ENCODE measurements at regions of chr1 and their contacts with region 1.

Region 1: DNA sequence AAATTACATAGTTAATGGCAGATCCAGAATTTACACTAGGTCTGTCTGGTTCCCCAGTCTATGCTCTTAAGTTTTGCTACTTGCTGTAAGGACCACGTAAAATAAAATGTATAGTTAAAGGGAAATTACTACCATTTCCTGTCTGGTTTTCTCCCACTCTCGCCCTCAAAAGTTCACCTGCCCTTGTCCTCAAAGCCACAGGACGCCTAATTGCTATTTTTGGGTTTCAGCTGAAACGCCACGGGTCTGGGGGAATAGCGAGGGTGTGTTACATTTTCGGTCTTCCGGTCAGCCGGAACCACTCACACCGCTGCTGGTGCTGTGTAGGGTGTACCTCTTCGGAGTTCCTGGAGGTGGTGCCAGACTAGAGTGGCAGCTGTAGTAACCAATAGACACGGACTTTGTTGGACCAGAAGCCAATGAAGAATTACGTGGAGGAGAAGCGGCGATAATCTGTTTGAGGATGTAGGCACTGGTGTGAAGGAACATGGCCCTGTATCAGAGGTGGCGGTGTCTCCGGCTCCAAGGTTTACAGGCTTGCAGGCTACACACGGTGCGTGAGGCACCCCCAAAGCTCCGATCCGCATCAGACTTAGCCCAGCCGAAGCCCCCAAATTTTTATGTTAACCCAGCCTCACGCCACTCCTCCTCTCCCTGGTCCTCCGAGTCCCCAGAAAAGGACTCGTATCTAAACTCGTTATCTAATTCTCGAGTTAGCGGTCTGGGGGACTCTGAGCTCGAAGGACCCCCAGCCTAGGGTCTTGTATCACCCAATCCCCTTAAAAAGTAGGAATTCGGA is at the start of gene TARS2:
- DNase-seq: peak; percentile 99
- ATAC-seq: peak; percentile 100
- H3K4me3 ChIP-seq: peak within 1 kb of the TSS; percentile 66
- H3K27ac ChIP-seq: peak within 1 kb of the TSS; percentile 78
- H3K4me1 ChIP-seq: no peaks in the 10 kb centered on the region; the same call in 1 of the 2 replicates
- H3K27me3 ChIP-seq: no peaks in the 10 kb centered on the region
- CTCF ChIP-seq: 0 out of 2 replicates have a peak, but pooled peaks have one; percentile 12
- POLR2A ChIP-seq: peak; percentile 52; the same call in 1 of the 2 replicates
- RAD21 ChIP-seq: no peak
- total RNA-seq, gene TARS2: 10.9 and 12.2 TPM in 2 replicates

Region 2: GRCh38 chr1:150532868-150533302 is 45.7 kb after region 1 on chr1:
- CTCF ChIA-PET with region 1: interaction called, 3 read pairs
- POLR2A ChIA-PET with region 1: no interaction called
- dilution Hi-C with region 1: no loop called
- in situ Hi-C with region 1: no loop called
- intact Hi-C with region 1: loop called (anchors 1 kb)
- DNase-seq: no peak
- ATAC-seq: no peak
- H3K4me3 ChIP-seq: no peak overlapping the region
- H3K27ac ChIP-seq: no peak overlapping the region
- H3K4me1 ChIP-seq: peaks cover 27% of the 10 kb centered on the region
- H3K27me3 ChIP-seq: no peaks in the 10 kb centered on the region
- CTCF ChIP-seq: no peak
- POLR2A ChIP-seq: no peak
- RAD21 ChIP-seq: no peak

Region 3: DNA sequence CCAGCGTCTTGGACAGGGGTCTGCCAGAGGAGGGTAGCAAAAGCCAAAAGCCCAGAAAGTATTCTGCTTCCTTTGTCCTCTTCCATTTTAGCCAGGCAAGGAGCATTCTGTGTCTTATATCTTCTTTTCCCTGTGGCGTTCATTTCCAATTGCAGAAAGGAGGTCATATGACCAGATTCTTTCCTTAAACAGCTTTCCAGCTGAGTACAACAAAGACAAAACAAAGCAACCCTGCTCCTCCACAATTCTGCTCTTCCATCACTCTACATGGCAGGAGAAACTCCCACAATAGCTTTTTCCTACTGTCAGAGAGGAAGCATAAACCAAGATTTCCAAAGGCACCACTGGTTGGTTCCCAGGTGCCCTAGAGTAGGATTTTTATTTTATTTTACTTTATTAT is 122.6 kb after region 1 on chr1:
- CTCF ChIA-PET with region 1: no interaction called
- POLR2A ChIA-PET with region 1: no interaction called
- dilution Hi-C with region 1: no loop called
- in situ Hi-C with region 1: no loop called
- intact Hi-C with region 1: no loop called
- DNase-seq: peak; percentile 30
- ATAC-seq: no peak
- H3K4me3 ChIP-seq: no peak overlapping the region
- H3K27ac ChIP-seq: peak overlapping the region; percentile 96
- H3K4me1 ChIP-seq: peaks cover 16% of the 10 kb centered on the region
- H3K27me3 ChIP-seq: no peaks in the 10 kb centered on the region
- CTCF ChIP-seq: no peak
- POLR2A ChIP-seq: no peak
- RAD21 ChIP-seq: no peak

Region 4: GRCh38 chr1:150621497-150622302 is 134.5 kb after region 1 on chr1:
- CTCF ChIA-PET with region 1: no interaction called
- POLR2A ChIA-PET with region 1: no interaction called
- dilution Hi-C with region 1: no loop called
- in situ Hi-C with region 1: no loop called
- intact Hi-C with region 1: loop called (anchors 1 kb)
- DNase-seq: peak; percentile 79
- ATAC-seq: peak; percentile 57
- H3K4me3 ChIP-seq: no peak overlapping the region
- H3K27ac ChIP-seq: no peak overlapping the region; the same call in 1 of the 2 replicates
- H3K4me1 ChIP-seq: peaks cover 10% of the 10 kb centered on the region
- H3K27me3 ChIP-seq: no peaks in the 10 kb centered on the region
- CTCF ChIP-seq: peak; percentile 79
- POLR2A ChIP-seq: no peak
- RAD21 ChIP-seq: peak; percentile 66

Measured in IMR-90 (cell line).